ENCODE measurements at regions of chr5 and their contacts with region 1.

Region 1: GRCh38 chr5:72307968-72308852 is 11.8 kb downstream of the MRPS27 start:
- DNase-seq: peak; percentile 91
- ATAC-seq: peak; percentile 97
- H3K4me3 Mint-ChIP-seq: peak overlapping the region; percentile 75
- H3K27ac Mint-ChIP-seq: peak overlapping the region; percentile 97
- H3K4me1 Mint-ChIP-seq: peaks cover 20% of the 10 kb centered on the region
- H3K27me3 Mint-ChIP-seq: no peaks in the 10 kb centered on the region
- CTCF ChIP-seq: peak; percentile 29; the same call in 1 of the 2 replicates

Region 2: GRCh38 chr5:72319976-72320752 is 12.0 kb after region 1 on chr5 and contains the starts of genes MRPS27 and PTCD2:
- CTCF ChIA-PET with region 1: interaction called, 7 read pairs
- POLR2A ChIA-PET with region 1: interaction called, 11 read pairs
- DNase-seq: peak; percentile 97
- ATAC-seq: peak; percentile 98
- H3K4me3 Mint-ChIP-seq: peak within 1 kb of the TSS; percentile 100
- H3K27ac Mint-ChIP-seq: peak within 1 kb of the TSS; percentile 99
- H3K4me1 Mint-ChIP-seq: peaks cover 33% of the 10 kb centered on the region
- H3K27me3 Mint-ChIP-seq: no peaks in the 10 kb centered on the region
- CTCF ChIP-seq: no peak
- total RNA-seq, gene MRPS27: 80.1 to 96.9 TPM (median 91.0 TPM) in 3 replicates
- total RNA-seq, gene PTCD2: 13.0 to 14.3 TPM (median 13.8 TPM) in 3 replicates